ENCODE measurements at regions of chr18 and their contacts with region 1.

Region 1: GRCh38 chr18:45024357-45025088 is 343.8 kb downstream of the SETBP1 start:
- DNase-seq: no peak
- ATAC-seq: no peak
- H3K4me3 ChIP-seq: no peak overlapping the region
- H3K27ac ChIP-seq: no peak overlapping the region
- H3K4me1 ChIP-seq: peaks cover 0 to 1% of the 10 kb centered on the region in 2 donors
- H3K27me3 ChIP-seq: no peaks in the 10 kb centered on the region

Region 2: GRCh38 chr18:44325903-44326635 is 698.5 kb before region 1 on chr18:
- intact Hi-C with region 1: no loop called
- DNase-seq: peak in 1 of 2 donors; percentile 59
- ATAC-seq: no peak
- H3K4me3 ChIP-seq: no peak overlapping the region
- H3K27ac ChIP-seq: no peak overlapping the region
- H3K4me1 ChIP-seq: no peaks in the 10 kb centered on the region
- H3K27me3 ChIP-seq: no peaks in the 10 kb centered on the region

Region 3: GRCh38 chr18:45050712-45051601 is 26.4 kb after region 1 on chr18:
- intact Hi-C with region 1: no loop called
- DNase-seq: no peak
- ATAC-seq: no peak
- H3K4me3 ChIP-seq: no peak overlapping the region
- H3K27ac ChIP-seq: no peak overlapping the region
- H3K4me1 ChIP-seq: peaks cover 0 to 2% of the 10 kb centered on the region in 2 donors
- H3K27me3 ChIP-seq: no peaks in the 10 kb centered on the region

Region 4: GRCh38 chr18:45580127-45580526 is 555.6 kb after region 1 on chr18:
- intact Hi-C with region 1: loop called in 1 of 2 experiments (anchors 5 kb)
- DNase-seq: no peak
- ATAC-seq: no peak
- H3K4me3 ChIP-seq: no peak overlapping the region
- H3K27ac ChIP-seq: no peak overlapping the region
- H3K4me1 ChIP-seq: no peaks in the 10 kb centered on the region
- H3K27me3 ChIP-seq: no peaks in the 10 kb centered on the region

Measured in aorta (tissue), 5 donors.